CD8-positive, alpha-beta memory T cell (primary cell): ENCODE measurements at regions of chr11 and their contacts with region 1.

Region 1: DNA sequence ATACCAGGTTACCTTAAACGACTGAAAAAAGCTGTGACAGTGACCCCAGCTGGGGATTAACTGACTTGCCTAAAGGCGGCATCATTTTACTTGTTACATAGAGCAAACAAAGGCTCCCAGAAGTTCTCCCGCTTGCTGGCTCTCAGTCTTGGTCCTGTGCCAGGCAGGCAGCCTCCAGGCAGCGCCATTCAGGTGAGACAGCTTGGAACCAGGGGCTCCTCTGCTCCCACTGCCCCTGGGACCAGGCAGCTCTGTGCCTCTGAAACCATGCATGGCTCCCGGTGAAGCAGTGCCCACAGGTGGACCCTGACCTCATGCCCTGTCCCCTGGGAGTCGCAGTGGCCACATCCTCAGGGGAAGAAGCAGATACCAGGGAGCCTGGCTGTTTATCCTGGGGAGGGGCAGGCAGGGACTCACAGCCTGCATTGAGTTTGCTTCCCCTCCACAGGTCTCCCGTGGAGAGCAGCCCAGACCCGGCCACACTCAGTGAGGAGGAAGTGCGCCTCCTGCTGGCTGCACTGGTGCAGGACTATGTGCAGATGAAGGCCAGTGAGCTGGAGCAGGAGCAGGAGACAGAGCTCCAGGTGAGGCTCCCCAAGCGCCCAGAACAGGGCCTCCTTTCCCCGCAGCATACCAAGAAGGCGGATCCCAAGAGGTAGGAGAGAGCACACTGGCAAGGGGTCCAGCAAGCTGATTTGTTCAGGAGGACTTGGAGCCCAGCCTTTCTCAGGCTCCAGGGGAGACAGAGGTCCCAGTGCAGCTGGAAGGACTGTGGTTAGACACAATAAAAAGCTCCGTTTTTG is 15.6 kb upstream of the CYP2R1 start:
- DNase-seq: peak; percentile 70 to 84 (median 76)
- H3K4me3 ChIP-seq: no peak overlapping the region
- H3K4me3 Mint-ChIP-seq: peak overlapping the region in 1 of 7 donors; percentile 76
- H3K27ac ChIP-seq: no peak overlapping the region
- H3K27ac Mint-ChIP-seq: peak overlapping the region in 7 of 8 donors; percentile 17 to 93 (median 76)
- H3K4me1 ChIP-seq: peaks cover 16% of the 10 kb centered on the region
- H3K4me1 Mint-ChIP-seq: peaks cover 29 to 51% (median 42%) of the 10 kb centered on the region in 3 donors
- H3K27me3 ChIP-seq: no peaks in the 10 kb centered on the region
- H3K27me3 Mint-ChIP-seq: peaks cover 0 to 4% of the 10 kb centered on the region in 2 donors

Region 2: GRCh38 chr11:14519917-14520746 is 387.5 kb before region 1 on chr11 and contains the start of gene PSMA1:
- CTCF ChIA-PET with region 1: interaction called, 11 read pairs
- POLR2A ChIA-PET with region 1: no interaction called
- DNase-seq: peak; percentile 89 to 93 (median 89)
- H3K4me3 ChIP-seq: peak within 1 kb of the TSS; percentile 93
- H3K4me3 Mint-ChIP-seq: peak within 1 kb of the TSS; percentile 94 to 98 (median 97)
- H3K27ac ChIP-seq: peak within 1 kb of the TSS; percentile 83
- H3K27ac Mint-ChIP-seq: peak within 1 kb of the TSS; percentile 93 to 98 (median 96)
- H3K4me1 ChIP-seq: peaks cover 24% of the 10 kb centered on the region
- H3K4me1 Mint-ChIP-seq: peaks cover 33 to 40% (median 36%) of the 10 kb centered on the region in 3 donors
- H3K27me3 ChIP-seq: no peaks in the 10 kb centered on the region
- H3K27me3 Mint-ChIP-seq: no peaks in the 10 kb centered on the region
- total RNA-seq, gene PSMA1: 337 to 344 TPM

Region 3: DNA sequence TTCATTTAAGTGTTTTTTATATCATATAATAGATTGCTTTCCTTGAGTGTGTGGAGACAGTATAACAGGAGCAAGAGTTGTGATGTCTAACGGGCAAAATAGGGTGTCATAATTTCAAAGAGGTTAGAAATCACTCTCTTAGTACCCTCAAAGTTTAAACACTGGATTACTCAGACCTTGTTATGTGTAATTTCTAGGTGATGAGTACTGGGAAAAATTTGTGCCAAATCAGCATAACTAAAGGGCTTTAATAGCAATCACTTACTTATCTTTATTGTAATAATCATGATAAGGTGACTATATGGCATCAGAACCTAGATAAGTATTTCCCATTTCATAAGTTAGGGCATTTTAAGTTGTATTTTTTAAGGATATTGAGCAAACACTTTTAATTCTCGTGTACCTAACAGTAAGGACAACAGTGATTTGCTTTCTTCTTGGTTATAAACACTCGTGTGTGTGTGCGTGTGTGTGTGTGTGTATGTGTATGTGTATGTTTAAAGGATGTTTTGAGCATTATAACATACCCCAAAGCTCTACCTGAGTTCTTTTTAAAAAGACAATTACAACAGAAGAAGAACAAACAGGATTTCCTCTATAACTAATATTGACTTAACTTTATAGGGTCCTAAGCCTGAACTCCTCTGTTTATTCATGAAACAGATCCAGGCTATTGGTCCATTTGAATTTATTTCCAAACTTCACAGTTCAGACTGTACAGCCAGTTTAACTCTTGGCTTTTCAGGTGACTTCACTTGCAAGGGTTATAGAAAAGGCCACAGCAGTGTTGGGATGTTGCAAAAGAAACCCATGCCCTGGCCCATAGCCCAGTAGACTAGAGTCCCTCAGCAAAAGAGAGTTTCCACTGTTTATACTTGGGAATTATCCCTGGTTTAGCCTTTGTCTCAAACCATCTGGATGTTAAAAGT is 287.7 kb before region 1 on chr11:
- CTCF ChIA-PET with region 1: interaction called, 10 read pairs
- POLR2A ChIA-PET with region 1: interaction called, 3 read pairs
- DNase-seq: no peak
- H3K4me3 ChIP-seq: no peak overlapping the region
- H3K4me3 Mint-ChIP-seq: no peak overlapping the region
- H3K27ac ChIP-seq: no peak overlapping the region
- H3K27ac Mint-ChIP-seq: peak overlapping the region in 4 of 8 donors; percentile 23 to 78 (median 45)
- H3K4me1 ChIP-seq: peaks cover 9% of the 10 kb centered on the region
- H3K4me1 Mint-ChIP-seq: peaks cover 29 to 85% (median 46%) of the 10 kb centered on the region in 3 donors
- H3K27me3 ChIP-seq: no peaks in the 10 kb centered on the region
- H3K27me3 Mint-ChIP-seq: no peaks in the 10 kb centered on the region

Region 4: DNA sequence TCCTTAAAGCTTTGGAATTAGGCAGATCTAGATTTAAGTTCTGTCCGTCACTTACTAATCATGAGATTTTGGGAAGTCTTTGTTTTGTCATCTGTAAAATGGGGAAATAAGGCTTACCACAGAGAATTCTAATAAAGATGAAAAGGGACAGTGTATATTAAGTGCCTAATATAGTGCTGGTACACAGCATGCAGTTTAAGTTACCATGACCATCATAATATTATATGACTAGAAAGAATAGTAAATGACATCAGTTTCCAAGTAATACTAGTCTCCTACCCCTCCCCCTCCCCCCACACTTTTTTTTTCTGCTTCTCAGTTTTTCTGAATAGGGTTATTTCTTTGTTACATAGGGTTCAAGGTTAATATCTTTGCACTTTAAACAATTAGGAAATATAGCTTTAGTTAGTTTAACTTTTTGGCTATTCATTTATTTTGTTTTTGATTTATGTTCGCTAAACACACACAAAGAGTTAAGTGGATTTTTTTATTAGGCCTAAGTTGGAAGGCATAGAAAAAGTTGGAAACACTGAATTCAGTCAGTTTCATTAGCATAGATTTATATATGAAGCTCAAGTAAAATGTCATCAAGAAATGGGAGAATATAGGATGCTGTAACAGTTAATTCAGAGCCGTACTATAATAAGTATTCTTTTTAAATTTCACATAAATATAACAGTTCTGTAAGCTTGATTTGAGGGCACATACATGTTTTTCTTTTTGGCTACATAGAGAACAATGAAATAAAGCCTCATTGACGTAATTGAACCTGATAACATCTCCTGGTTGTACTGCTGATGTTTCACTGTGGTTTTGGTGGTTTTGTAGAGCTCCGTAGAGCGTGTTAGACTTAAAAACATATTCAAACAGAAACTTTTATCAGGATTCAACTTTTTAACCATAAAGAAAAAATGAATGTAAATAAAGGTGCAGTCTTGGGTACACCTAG is 142.8 kb before region 1 on chr11:
- CTCF ChIA-PET with region 1: interaction called, 10 read pairs
- POLR2A ChIA-PET with region 1: no interaction called
- DNase-seq: peak in 4 of 5 donors; percentile 31 to 92 (median 79)
- H3K4me3 ChIP-seq: peak overlapping the region; percentile 1
- H3K4me3 Mint-ChIP-seq: peak overlapping the region in 6 of 7 donors; percentile 37 to 76 (median 64)
- H3K27ac ChIP-seq: no peak overlapping the region
- H3K27ac Mint-ChIP-seq: peak overlapping the region in 1 of 8 donors; percentile 48
- H3K4me1 ChIP-seq: peaks cover 82% of the 10 kb centered on the region
- H3K4me1 Mint-ChIP-seq: peaks cover 29 to 39% (median 34%) of the 10 kb centered on the region in 3 donors
- H3K27me3 ChIP-seq: no peaks in the 10 kb centered on the region
- H3K27me3 Mint-ChIP-seq: no peaks in the 10 kb centered on the region

Region 5: DNA sequence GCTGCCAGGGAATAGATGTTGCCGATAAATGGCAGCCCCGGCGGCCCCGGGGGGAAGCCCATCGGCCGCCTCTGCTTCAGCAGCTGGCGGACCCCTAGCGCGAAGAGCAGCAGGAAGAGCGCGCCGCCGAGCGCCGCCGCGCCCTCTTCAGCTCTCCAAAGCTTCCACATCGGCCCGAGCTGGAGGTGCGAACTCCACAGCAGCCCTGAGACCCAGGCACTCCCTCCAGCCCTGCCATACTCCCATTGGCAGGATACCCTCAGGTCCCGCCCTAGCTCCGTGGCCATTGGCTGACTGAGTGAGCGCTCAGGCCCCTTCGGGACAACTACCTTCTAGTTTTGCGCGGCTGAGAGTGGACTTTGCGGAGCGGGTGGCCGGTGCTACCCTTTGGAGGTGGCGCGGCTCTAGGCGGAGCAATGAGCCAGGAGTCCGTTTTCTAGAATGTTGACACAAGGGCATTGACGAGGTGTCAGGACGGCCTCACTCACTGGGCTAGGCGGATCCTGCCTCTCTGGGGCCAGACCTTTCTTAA is 15.5 kb before region 1 on chr11 and contains the start of gene CYP2R1:
- CTCF ChIA-PET with region 1: interaction called, 68 read pairs
- POLR2A ChIA-PET with region 1: interaction called, 10 read pairs
- DNase-seq: peak; percentile 81 to 92 (median 89)
- H3K4me3 ChIP-seq: peak within 1 kb of the TSS; percentile 90
- H3K4me3 Mint-ChIP-seq: peak within 1 kb of the TSS; percentile 92 to 98 (median 97)
- H3K27ac ChIP-seq: peak within 1 kb of the TSS; percentile 83
- H3K27ac Mint-ChIP-seq: peak within 1 kb of the TSS; percentile 91 to 99 (median 97)
- H3K4me1 ChIP-seq: peaks cover 23% of the 10 kb centered on the region
- H3K4me1 Mint-ChIP-seq: peaks cover 25 to 44% (median 39%) of the 10 kb centered on the region in 3 donors
- H3K27me3 ChIP-seq: no peaks in the 10 kb centered on the region
- H3K27me3 Mint-ChIP-seq: peaks cover 0 to 2% of the 10 kb centered on the region in 2 donors
- total RNA-seq, gene CYP2R1: 5.6 to 5.9 TPM

Region 6: GRCh38 chr11:15006139-15006759 is 98.6 kb after region 1 on chr11:
- CTCF ChIA-PET with region 1: interaction called, 24 read pairs
- POLR2A ChIA-PET with region 1: no interaction called
- DNase-seq: peak in 2 of 5 donors; percentile 25 to 30
- H3K4me3 ChIP-seq: no peak overlapping the region
- H3K4me3 Mint-ChIP-seq: no peak overlapping the region
- H3K27ac ChIP-seq: no peak overlapping the region
- H3K27ac Mint-ChIP-seq: no peak overlapping the region
- H3K4me1 ChIP-seq: no peaks in the 10 kb centered on the region
- H3K4me1 Mint-ChIP-seq: no peaks in the 10 kb centered on the region
- H3K27me3 ChIP-seq: no peaks in the 10 kb centered on the region
- H3K27me3 Mint-ChIP-seq: peaks cover 11 to 59% of the 10 kb centered on the region in 2 donors

Region 7: DNA sequence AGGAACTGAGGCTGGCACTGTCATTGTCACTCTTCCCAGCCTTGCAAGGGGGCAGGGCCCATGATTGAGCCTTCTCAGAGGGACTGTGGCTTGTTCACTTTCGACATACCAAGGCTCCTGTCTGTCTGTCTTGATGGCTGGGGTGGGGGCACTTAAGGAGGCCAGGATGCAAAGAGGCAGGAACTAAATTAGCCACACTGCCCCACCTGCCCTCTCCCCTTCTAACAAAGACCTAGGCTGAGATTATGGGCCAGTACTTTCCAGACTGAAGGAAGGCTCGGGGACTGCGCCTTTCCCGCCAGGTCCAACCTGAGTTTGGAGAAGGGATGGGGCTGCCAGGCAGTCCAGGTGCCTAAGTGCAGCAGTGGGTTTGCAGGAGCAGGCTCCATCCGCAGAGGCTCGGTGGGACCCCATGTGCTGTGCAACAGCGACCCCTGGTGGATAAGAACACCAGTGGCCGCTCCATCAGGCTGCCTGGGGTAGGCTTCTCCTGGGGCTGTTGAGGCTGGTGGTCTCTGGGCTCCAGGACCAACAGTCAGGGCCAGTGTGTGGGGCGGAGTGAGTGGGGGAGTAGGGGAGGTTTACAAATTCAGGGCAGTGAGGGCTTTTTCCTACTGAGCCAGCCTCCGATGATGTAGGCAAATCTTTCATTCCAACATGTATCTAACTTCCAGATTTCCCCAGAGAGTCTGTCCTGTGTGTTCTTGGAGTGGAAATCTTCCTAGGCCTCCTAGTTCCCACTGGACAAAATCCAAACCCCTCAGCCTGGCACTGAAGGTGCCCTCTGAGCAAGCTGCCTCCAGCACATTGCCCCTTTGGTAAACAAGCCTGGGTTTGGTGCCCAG is 301.0 kb after region 1 on chr11:
- CTCF ChIA-PET with region 1: interaction called, 22 read pairs
- POLR2A ChIA-PET with region 1: no interaction called
- DNase-seq: peak; percentile 44 to 77 (median 56)
- H3K4me3 ChIP-seq: no peak overlapping the region
- H3K4me3 Mint-ChIP-seq: no peak overlapping the region
- H3K27ac ChIP-seq: no peak overlapping the region
- H3K27ac Mint-ChIP-seq: no peak overlapping the region
- H3K4me1 ChIP-seq: no peaks in the 10 kb centered on the region
- H3K4me1 Mint-ChIP-seq: no peaks in the 10 kb centered on the region
- H3K27me3 ChIP-seq: no peaks in the 10 kb centered on the region
- H3K27me3 Mint-ChIP-seq: peaks cover 0 to 4% of the 10 kb centered on the region in 2 donors